AG04450 (cell line): ENCODE measurements at regions of chr11 and their contacts with region 1.

Region 1: GRCh38 chr11:2930704-2931428 is 1.6 kb upstream of the PHLDA2 start:
- DNase-seq: no peak
- H3K4me3 ChIP-seq: peak overlapping the region; percentile 77
- H3K27ac ChIP-seq: peak overlapping the region; percentile 92
- H3K27me3 ChIP-seq: no peaks in the 10 kb centered on the region
- CTCF ChIP-seq: no peak; the same call in none of the 2 replicates

Region 2: GRCh38 chr11:2892215-2893020 is 38.4 kb before region 1 on chr11:
- CTCF ChIA-PET with region 1: interaction called, 4 read pairs
- POLR2A ChIA-PET with region 1: interaction called, 22 read pairs
- DNase-seq: no peak
- H3K4me3 ChIP-seq: peak overlapping the region; percentile 63
- H3K27ac ChIP-seq: peak overlapping the region; percentile 61
- H3K27me3 ChIP-seq: no peaks in the 10 kb centered on the region
- CTCF ChIP-seq: peak; percentile 91

Region 3: GRCh38 chr11:2901854-2902783 is 28.7 kb before region 1 on chr11:
- CTCF ChIA-PET with region 1: interaction called, 3 read pairs
- POLR2A ChIA-PET with region 1: interaction called, 13 read pairs
- DNase-seq: peak; percentile 63
- H3K4me3 ChIP-seq: peak overlapping the region; percentile 80
- H3K27ac ChIP-seq: peak overlapping the region; percentile 52
- H3K27me3 ChIP-seq: no peaks in the 10 kb centered on the region
- CTCF ChIP-seq: no peak

Region 4: GRCh38 chr11:2945031-2945756 is 14.3 kb after region 1 on chr11:
- CTCF ChIA-PET with region 1: interaction called, 15 read pairs
- POLR2A ChIA-PET with region 1: interaction called, 32 read pairs
- DNase-seq: peak; percentile 83
- H3K4me3 ChIP-seq: peak overlapping the region; percentile 46
- H3K27ac ChIP-seq: peak overlapping the region; percentile 79
- H3K27me3 ChIP-seq: no peaks in the 10 kb centered on the region
- CTCF ChIP-seq: no peak

Region 5: GRCh38 chr11:3671334-3672254 is 740.7 kb after region 1 on chr11 and contains the start of gene CHRNA10:
- CTCF ChIA-PET with region 1: no interaction called
- POLR2A ChIA-PET with region 1: no interaction called
- DNase-seq: no peak
- H3K4me3 ChIP-seq: no peak within 1 kb of the TSS
- H3K27ac ChIP-seq: peak within 1 kb of the TSS; percentile 2
- H3K27me3 ChIP-seq: no peaks in the 10 kb centered on the region
- CTCF ChIP-seq: no peak
- polyA plus RNA-seq, gene CHRNA10: 0.25 and 0.41 TPM in 2 replicates